ENCODE measurements at regions of chr3 and their contacts with region 1.

Region 1: DNA sequence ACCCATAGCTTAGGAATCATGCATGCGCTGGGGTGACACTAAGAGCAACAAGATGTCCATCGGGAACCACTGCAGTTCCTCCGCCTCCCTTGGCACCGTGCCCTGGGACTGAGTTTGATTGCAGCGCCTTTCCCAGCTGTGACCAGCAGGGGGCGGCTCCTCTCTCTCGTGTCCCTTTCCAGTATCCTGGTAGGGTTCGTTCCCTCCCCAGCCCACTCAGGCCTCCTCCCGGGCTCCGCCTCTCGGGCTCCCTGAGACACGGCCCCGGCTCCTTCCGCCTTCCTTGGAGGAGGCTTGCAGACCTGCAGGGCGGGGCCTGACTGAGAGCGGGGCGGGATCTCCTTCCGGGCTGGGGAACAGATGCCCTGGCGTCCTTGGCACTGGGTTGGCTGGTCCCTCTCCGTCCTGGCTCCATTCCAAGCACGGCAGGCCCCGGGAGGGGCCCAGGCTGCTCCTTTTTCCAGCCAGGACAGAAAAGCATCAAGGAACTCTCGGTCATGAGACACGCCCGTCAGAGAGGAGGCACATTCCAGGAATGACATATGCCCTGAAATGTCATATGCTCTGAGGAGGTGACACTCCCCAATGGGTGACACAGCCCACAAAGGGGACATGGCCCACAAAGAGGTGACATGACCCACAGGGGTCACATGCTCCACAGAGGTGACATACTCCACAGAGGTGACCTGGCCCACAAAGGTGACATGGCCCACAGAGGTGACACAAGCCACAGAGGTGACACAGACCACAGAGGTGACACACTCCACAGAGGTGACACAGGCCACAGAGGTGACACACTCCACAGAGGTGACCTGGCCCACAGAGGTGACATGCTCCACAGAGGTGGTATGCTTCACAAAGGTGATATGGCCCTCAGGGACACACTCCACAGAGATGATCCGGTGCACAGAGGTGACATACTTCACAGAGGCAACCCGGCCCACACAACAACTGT is 79.0 kb downstream of the ABHD5 start:
- DNase-seq: peak; percentile 73
- H3K4me3 ChIP-seq: peak overlapping the region; percentile 44
- CTCF ChIP-seq: peak; percentile 92

Region 2: DNA sequence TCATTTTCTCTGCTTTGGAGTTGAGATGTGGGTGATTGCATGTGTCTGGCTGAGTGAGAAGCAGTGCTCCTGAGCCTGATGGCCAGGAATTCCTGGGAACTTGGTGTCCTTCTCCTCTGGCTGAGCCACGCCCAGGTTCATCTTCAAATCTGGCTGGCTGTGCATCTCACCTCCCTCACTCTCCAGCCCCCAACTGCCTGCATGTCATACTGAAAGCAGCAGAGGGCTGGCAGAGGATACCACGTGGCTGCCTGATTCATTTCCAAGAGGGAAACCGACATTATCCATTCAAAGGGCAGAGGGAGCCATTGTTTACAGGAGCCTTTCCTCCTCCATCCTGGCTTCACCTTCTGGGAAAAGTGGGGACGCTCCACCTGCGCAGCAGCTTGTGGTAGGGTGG is 21.6 kb before region 1 on chr3:
- CTCF ChIA-PET with region 1: interaction called, 11 read pairs
- POLR2A ChIA-PET with region 1: no interaction called
- DNase-seq: no peak
- H3K4me3 ChIP-seq: no peak overlapping the region
- CTCF ChIP-seq: no peak

Region 3: GRCh38 chr3:43759297-43759782 is 10.4 kb before region 1 on chr3:
- CTCF ChIA-PET with region 1: interaction called, 29 read pairs
- POLR2A ChIA-PET with region 1: interaction called, 4 read pairs
- DNase-seq: peak; percentile 36
- H3K4me3 ChIP-seq: no peak overlapping the region
- CTCF ChIP-seq: peak; percentile 0

Region 4: DNA sequence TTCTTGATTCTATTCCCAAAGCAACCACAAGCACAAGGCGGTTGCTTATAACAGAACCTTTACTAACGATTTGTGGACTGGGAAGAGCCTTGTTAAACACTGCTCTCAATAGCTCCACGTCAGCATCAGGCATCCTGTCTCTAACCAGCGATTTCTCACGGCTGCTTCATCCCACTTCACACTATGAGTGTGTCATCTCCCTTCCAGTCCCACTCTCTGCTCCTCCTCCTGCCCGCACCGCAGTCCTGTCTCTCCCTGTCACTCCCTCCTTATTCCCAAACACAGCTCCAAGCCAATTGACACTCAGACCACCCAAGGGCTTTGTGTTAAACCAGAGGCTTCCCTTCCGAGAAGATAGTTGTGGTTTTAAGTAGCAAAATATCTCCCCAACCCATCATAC is 15.8 kb after region 1 on chr3:
- CTCF ChIA-PET with region 1: interaction called, 24 read pairs
- POLR2A ChIA-PET with region 1: no interaction called
- DNase-seq: peak; percentile 63
- H3K4me3 ChIP-seq: no peak overlapping the region; the same call in 1 of the 2 replicates
- CTCF ChIP-seq: no peak

Region 5: GRCh38 chr3:43855674-43856299 is 86.0 kb after region 1 on chr3:
- CTCF ChIA-PET with region 1: interaction called, 23 read pairs
- POLR2A ChIA-PET with region 1: no interaction called
- DNase-seq: no peak
- H3K4me3 ChIP-seq: no peak overlapping the region
- CTCF ChIP-seq: peak; percentile 73

Region 6: GRCh38 chr3:44198284-44199269 is 428.8 kb after region 1 on chr3:
- CTCF ChIA-PET with region 1: interaction called, 22 read pairs
- POLR2A ChIA-PET with region 1: no interaction called
- DNase-seq: peak; percentile 12
- H3K4me3 ChIP-seq: no peak overlapping the region
- CTCF ChIP-seq: peak; percentile 83

Measured in AG04449 (cell line).